Heart right ventricle (tissue), 16 donors: ENCODE measurements at regions of chr6 and their contacts with region 1.

Region 1: DNA sequence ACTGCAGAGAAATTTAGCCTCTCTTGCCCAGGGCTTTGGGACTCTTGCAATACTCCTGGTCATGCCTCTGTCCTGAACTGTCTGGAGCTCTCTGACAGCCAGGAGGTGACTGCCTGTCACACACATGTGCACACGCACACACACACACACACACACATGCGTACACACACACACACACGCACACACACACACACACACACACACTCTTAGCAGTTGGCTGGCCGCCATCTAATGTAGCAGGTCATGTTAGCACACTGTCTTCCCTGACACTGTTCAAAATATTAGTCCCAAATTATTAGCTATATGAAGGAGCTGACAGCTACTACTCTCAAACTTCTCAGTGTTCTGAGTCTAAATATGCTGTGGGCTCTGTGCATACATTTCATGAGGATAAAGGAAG is 60.9 kb downstream of the IPCEF1 start:
- DNase-seq: no peak
- ATAC-seq: peak in 2 of 8 donors; percentile 8 to 30
- H3K4me3 ChIP-seq: no peak overlapping the region
- H3K27ac ChIP-seq: peak overlapping the region in 1 of 10 donors; percentile 49
- H3K4me1 ChIP-seq: peaks cover 0 to 29% (median 14%) of the 10 kb centered on the region in 9 donors
- H3K27me3 ChIP-seq: no peaks in the 10 kb centered on the region
- CTCF ChIP-seq: no peak

Region 2: GRCh38 chr6:154276810-154277628 is 18.7 kb before region 1 on chr6:
- intact Hi-C with region 1: loop called in 1 of 10 experiments (anchors 1 kb)
- DNase-seq: no peak
- ATAC-seq: peak in 2 of 8 donors; percentile 35 to 39
- H3K4me3 ChIP-seq: peak overlapping the region in 3 of 10 donors; percentile 1 to 10 (median 5)
- H3K27ac ChIP-seq: no peak overlapping the region
- H3K4me1 ChIP-seq: peaks cover 0 to 13% (median 3%) of the 10 kb centered on the region in 9 donors
- H3K27me3 ChIP-seq: no peaks in the 10 kb centered on the region
- CTCF ChIP-seq: peak in 8 of 9 donors; percentile 34 to 74 (median 64)